ENCODE measurements at regions of chr1 and their contacts with region 1.

Region 1: GRCh38 chr1:224368409-224368808 is 11.7 kb downstream of the CNIH4 start:
- DNase-seq: no peak
- ATAC-seq: peak in 2 of 4 donors; percentile 75 to 88
- H3K4me3 ChIP-seq: no peak overlapping the region
- H3K27ac ChIP-seq: no peak overlapping the region
- H3K4me1 ChIP-seq: no peaks in the 10 kb centered on the region
- H3K27me3 ChIP-seq: no peaks in the 10 kb centered on the region
- CTCF ChIP-seq: no peak
- POLR2A ChIP-seq: no peak

Region 2: GRCh38 chr1:224292419-224292818 is 76.0 kb before region 1 on chr1:
- intact Hi-C with region 1: loop called in 1 of 10 experiments (anchors 10 kb)
- DNase-seq: no peak
- ATAC-seq: no peak
- H3K4me3 ChIP-seq: no peak overlapping the region
- H3K27ac ChIP-seq: no peak overlapping the region
- H3K4me1 ChIP-seq: no peaks in the 10 kb centered on the region
- H3K27me3 ChIP-seq: no peaks in the 10 kb centered on the region
- CTCF ChIP-seq: no peak
- POLR2A ChIP-seq: no peak

Region 3: DNA sequence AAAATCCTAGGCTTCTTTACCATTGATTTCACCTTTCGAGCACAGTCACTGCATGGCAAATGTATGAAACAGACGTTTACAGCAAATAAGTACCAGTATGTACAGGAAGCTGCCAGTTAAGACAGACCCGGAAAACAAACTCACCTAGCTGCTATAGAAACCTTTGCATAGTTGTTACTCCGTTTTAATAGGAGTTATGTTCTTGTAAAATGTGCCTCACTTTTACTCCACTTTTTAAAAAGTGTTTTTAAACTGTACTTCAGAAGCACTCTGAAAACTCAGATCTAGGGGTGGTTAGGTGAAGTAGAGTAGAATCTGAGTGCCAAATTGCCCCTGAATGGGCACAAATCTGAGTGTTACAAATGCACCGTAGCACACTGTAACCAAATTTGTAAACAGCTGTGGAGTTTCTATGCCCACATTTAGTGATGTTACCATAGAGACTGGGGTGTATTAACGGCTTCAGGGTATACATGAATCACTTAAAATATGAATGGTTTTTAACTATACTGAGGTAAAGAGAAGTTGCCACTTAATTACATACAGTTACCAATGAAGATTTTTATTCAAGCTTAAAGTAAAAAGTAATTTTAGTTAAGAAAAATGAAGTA is 19.0 kb after region 1 on chr1:
- intact Hi-C with region 1: no loop called
- DNase-seq: no peak
- ATAC-seq: no peak
- H3K4me3 ChIP-seq: no peak overlapping the region
- H3K27ac ChIP-seq: peak overlapping the region in 1 of 12 donors; percentile 0
- H3K4me1 ChIP-seq: peaks cover 0 to 28% (median 0%) of the 10 kb centered on the region in 12 donors
- H3K27me3 ChIP-seq: no peaks in the 10 kb centered on the region
- CTCF ChIP-seq: no peak
- POLR2A ChIP-seq: no peak

Measured in heart left ventricle (tissue), 16 donors.